Common myeloid progenitor, CD34-positive (primary cell): ENCODE measurements at regions of chr3 and their contacts with region 1.

Region 1: DNA sequence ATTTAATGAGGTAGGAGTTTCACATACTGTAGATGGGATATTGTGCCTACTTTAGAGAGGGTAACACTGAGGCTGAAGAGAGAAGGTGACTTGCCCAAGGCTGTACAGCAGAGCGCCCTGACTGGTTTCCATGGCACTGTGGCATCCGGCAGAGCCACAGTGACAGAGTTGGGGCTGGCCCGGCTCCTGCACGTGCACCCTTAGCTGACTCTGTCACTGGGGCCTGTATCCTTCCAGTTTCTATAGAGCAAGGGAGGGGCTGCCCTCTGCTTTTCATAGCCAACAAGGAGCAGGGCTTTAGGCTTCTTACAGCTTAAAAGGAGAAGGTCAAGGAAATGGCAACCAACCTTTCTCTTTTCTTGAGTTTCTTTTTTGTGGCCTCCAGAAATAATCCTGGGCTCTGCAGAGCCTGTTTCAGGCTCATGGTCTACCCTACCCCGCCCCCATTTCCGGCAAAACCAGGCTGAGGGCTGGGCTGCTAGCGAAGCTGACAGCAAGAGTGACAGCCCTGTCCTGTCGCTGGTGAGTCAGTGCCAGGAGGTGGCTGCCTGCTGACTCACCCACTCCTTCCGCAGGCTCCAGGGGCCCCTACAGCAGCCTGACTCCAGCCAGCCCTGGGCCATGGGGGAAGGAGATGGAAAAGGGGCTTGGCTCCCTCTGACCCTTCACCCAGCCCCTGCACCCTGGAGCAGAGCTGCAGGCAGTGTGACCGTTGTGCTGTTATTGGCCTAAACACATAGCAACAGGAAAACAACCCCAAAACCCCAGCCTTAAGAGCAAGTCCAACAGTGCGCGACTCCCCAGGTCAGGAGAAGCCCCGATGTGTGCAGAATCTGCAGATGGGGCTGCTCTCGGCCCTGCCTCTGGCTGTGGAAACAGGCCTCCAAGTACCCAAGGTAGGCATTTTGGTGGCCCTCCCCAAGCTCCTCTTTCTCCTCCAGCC is 29.8 kb downstream of the SLC6A6 start:
- DNase-seq: peak; percentile 97 to 99 (median 99)
- H3K4me3 ChIP-seq: peak overlapping the region in 5 of 7 experiments; percentile 16 to 62 (median 49)
- H3K27ac ChIP-seq: peak overlapping the region; percentile 90 to 94
- H3K4me1 ChIP-seq: peaks cover 22 to 97% (median 89%) of the 10 kb centered on the region in 4 experiments
- H3K27me3 ChIP-seq: no peaks in the 10 kb centered on the region

Region 2: GRCh38 chr3:14402304-14402811 is 29.8 kb before region 1 on chr3 and contains the start of gene SLC6A6:
- CTCF ChIA-PET with region 1: interaction called, 100 read pairs
- POLR2A ChIA-PET with region 1: interaction called, 10 read pairs
- DNase-seq: peak; percentile 95 to 98 (median 97)
- H3K4me3 ChIP-seq: peak within 1 kb of the TSS; percentile 67 to 100 (median 89)
- H3K27ac ChIP-seq: peak within 1 kb of the TSS in 1 of 2 experiments; percentile 80
- H3K4me1 ChIP-seq: peaks cover 0 to 65% (median 46%) of the 10 kb centered on the region in 4 experiments
- H3K27me3 ChIP-seq: no peaks in the 10 kb centered on the region

Region 3: DNA sequence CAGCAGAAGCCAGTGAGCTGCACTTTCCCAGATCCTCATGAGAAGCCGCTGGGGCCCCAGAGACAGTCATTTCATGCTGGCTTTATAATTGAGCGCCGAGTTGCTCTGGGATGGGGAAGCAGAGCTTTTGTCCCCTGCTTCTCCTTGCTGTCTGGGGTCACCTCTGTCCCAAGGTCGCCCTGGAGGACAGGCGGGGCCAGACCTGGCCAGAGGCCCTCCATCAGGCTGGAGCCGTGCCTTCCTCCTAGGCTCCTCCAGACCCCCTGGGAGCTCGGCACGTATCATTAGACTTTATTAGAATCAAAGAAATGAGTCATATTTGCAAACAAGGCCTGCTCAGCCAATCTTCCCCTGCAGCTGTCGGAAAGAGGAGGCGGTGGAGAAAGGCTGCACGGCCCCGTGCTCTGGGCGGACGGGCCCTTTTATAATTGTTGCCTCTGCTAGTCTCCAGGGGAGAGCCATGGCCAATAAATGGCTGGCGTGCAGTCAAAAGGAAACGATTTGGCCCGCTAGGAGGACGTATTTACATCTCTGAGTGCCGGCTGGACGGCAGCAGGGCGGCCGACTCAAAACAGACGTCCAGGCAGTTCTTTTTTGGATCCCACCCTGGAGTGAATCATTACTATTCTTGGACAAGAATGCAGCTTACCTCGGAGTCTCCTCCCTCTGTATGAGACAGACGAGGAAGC is 20.7 kb after region 1 on chr3:
- CTCF ChIA-PET with region 1: interaction called, 22 read pairs
- POLR2A ChIA-PET with region 1: no interaction called
- DNase-seq: no peak
- H3K4me3 ChIP-seq: no peak overlapping the region
- H3K27ac ChIP-seq: no peak overlapping the region
- H3K4me1 ChIP-seq: peaks cover 0 to 10% (median 3%) of the 10 kb centered on the region in 4 experiments
- H3K27me3 ChIP-seq: no peaks in the 10 kb centered on the region